Heart right ventricle (tissue), 16 donors: ENCODE measurements at regions of chr1 and their contacts with region 1.

Region 1: DNA sequence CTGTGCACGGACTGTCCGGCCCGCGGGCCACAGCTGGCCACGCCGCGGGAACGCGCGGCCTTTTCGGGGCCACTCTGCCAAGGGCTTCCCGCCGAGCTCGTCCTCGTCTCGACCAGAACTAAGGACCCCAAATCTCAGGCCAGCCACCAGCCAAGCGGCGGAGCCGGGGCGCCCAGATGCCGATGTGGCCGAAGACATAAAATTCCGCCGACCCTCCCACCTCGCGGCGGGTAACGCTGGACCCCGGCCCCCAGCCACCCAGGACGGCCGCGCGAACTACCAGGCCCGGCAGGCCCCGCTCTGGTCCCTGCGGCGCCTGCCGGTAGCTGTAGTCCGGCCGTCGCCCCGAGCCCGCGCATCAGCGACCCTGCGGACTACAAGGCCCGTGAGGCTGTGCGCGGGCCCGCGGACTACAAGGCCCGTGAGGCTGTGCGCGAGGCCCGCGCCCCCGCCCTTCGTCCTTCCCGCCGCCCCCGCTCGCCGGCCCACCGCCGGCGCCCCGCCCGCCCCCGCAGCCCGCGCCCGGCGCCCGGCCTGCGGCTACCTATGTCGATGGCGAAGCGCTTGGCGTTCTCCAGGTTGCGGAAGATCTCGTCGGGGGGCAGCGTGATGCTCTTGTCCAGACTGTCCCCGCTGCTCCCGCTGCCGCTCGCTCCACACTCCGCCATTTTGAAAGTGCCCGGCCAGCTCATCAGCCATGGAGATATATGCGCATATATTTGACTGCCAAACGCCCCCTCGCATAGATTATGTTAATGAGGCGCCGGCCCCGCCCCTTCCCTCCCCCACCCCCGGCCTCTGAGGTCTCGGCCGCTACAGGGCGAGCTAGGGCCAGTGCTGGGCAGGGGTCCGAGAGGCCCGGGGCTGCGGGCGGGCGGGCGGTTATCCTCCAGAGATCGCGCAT is at the start of gene PANK4:
- DNase-seq: peak; percentile 93
- ATAC-seq: peak; percentile 83 to 92 (median 89)
- H3K4me3 ChIP-seq: peak within 1 kb of the TSS; percentile 64 to 100 (median 90)
- H3K27ac ChIP-seq: peak within 1 kb of the TSS; percentile 75 to 94 (median 84)
- H3K4me1 ChIP-seq: peaks cover 39 to 72% (median 69%) of the 10 kb centered on the region in 9 donors
- H3K27me3 ChIP-seq: peaks cover 0 to 41% (median 4%) of the 10 kb centered on the region in 7 donors
- CTCF ChIP-seq: peak in 5 of 9 donors; percentile 8 to 39 (median 25)
- total RNA-seq, gene PANK4: 29.8 to 56.4 (median 35.2) TPM

Region 2: GRCh38 chr1:2194898-2195673 is 331.1 kb before region 1 on chr1:
- intact Hi-C with region 1: loop called in 1 of 10 experiments (anchors 5 kb)
- DNase-seq: peak; percentile 92
- ATAC-seq: peak; percentile 77 to 86 (median 82)
- H3K4me3 ChIP-seq: peak overlapping the region; percentile 47 to 78 (median 70)
- H3K27ac ChIP-seq: peak overlapping the region; percentile 90 to 98 (median 94)
- H3K4me1 ChIP-seq: peaks cover 36 to 71% (median 65%) of the 10 kb centered on the region in 9 donors
- H3K27me3 ChIP-seq: no peaks in the 10 kb centered on the region
- CTCF ChIP-seq: peak; percentile 91 to 98 (median 95)

Region 3: GRCh38 chr1:2412519-2413233 is 113.5 kb before region 1 on chr1 and contains the start of gene PEX10:
- intact Hi-C with region 1: loop called in 1 of 10 experiments (anchors 5 kb)
- DNase-seq: peak; percentile 96 to 99
- ATAC-seq: peak; percentile 94 to 96 (median 94)
- H3K4me3 ChIP-seq: peak within 1 kb of the TSS; percentile 74 to 99 (median 86)
- H3K27ac ChIP-seq: peak within 1 kb of the TSS; percentile 76 to 93 (median 90)
- H3K4me1 ChIP-seq: peaks cover 3 to 37% (median 25%) of the 10 kb centered on the region in 9 donors
- H3K27me3 ChIP-seq: peaks cover 0 to 27% (median 20%) of the 10 kb centered on the region in 7 donors
- CTCF ChIP-seq: no peak
- total RNA-seq, gene PEX10: 14.6 to 26.0 (median 18.6) TPM

Region 4: GRCh38 chr1:2586154-2587070 is 60.2 kb after region 1 on chr1 and contains the start of gene PRXL2B:
- intact Hi-C with region 1: loop called in 2 of 10 experiments (anchors 2 to 5 kb)
- DNase-seq: peak; percentile 99 to 100
- ATAC-seq: peak; percentile 92 to 96 (median 94)
- H3K4me3 ChIP-seq: peak within 1 kb of the TSS; percentile 51 to 98 (median 93)
- H3K27ac ChIP-seq: peak within 1 kb of the TSS; percentile 96 to 100 (median 98)
- H3K4me1 ChIP-seq: peaks cover 9 to 36% (median 25%) of the 10 kb centered on the region in 9 donors
- H3K27me3 ChIP-seq: no peaks in the 10 kb centered on the region
- CTCF ChIP-seq: no peak
- total RNA-seq, gene PRXL2B: 3.7 to 10.3 (median 5.3) TPM